Naive thymus-derived CD4-positive, alpha-beta T cell (primary cell): ENCODE measurements at regions of chr6 and their contacts with region 1.

Region 1: DNA sequence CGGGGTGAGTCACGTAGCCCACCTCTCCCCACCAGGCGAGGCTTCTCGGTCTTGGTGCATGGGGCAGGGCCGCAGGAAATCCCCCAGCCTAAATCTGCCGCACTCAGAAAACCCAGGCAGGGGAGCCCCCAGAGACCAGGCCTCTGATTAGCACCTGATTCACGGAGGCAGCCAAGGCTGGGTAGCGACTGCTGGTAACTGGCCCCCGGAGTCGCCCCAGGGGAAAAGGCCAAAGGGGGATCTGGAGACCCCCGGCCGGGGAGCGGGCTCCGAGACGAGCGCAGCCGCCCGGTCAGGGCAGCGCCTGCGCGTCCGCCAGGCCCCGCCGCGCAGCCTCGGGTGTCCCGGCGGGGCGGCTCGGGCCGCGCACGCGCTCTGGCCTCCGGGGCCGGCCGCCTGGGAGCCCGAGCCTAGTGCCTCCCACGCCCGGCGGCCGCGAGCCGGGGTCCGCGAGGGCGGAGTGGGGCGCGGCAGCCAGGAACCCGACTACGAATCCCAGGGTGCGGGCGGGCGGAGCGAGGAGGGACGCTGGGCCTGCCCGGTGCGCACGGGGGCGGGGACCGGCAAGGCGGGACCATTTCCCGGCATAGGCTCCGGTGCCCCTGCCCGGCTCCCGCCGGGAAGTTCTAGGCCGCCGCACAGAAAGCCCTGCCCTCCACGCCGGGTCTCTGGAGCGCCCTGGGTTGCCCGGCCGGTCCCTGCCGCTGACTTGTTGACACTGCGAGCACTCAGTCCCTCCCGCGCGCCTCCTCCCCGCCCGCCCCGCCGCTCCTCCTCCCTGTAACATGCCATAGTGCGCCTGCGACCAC is at the start of gene DUSP22:
- DNase-seq: peak; percentile 52 to 95 (median 78)
- ATAC-seq: peak; percentile 74
- H3K4me3 ChIP-seq: peak within 1 kb of the TSS; percentile 63
- H3K4me3 Mint-ChIP-seq: peak within 1 kb of the TSS; percentile 85 to 97 (median 93)
- H3K27ac ChIP-seq: peak within 1 kb of the TSS; percentile 82
- H3K27ac Mint-ChIP-seq: peak within 1 kb of the TSS; percentile 86 to 98 (median 94)
- H3K4me1 ChIP-seq: peaks cover 9 to 26% of the 10 kb centered on the region in 2 donors
- H3K4me1 Mint-ChIP-seq: peaks cover 31 to 63% (median 47%) of the 10 kb centered on the region in 7 donors
- H3K27me3 ChIP-seq: no peaks in the 10 kb centered on the region
- H3K27me3 Mint-ChIP-seq: no peaks in the 10 kb centered on the region
- total RNA-seq, gene DUSP22: 24.8 to 57.2 (median 51.0) TPM

Region 2: DNA sequence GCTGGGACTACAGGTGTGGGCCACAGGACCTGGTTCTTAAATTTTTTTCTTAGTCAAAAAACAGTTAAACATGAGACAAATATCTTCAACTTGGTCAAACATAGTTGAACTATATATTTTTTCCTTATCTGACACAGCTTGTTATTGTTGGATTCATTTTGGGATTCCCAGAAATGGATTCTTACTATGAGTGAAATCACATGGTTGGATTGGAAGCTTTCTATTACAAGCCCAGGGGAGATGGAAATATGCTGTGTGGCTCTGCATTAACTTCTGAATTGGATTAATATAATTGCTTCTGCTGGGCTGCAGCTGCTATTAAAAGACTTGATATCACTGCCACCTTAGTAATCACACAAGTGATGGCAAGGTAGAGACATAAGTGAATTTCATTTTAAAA is 126.0 kb before region 1 on chr6:
- CTCF ChIA-PET with region 1: no interaction called
- POLR2A ChIA-PET with region 1: no interaction called
- intact Hi-C with region 1: no loop called
- DNase-seq: no peak
- ATAC-seq: no peak
- H3K4me3 ChIP-seq: no peak overlapping the region
- H3K4me3 Mint-ChIP-seq: no peak overlapping the region
- H3K27ac ChIP-seq: no peak overlapping the region
- H3K27ac Mint-ChIP-seq: no peak overlapping the region
- H3K4me1 ChIP-seq: no peaks in the 10 kb centered on the region
- H3K4me1 Mint-ChIP-seq: no peaks in the 10 kb centered on the region
- H3K27me3 ChIP-seq: no peaks in the 10 kb centered on the region
- H3K27me3 Mint-ChIP-seq: peaks cover 0 to 43% (median 0%) of the 10 kb centered on the region in 5 donors

Region 3: DNA sequence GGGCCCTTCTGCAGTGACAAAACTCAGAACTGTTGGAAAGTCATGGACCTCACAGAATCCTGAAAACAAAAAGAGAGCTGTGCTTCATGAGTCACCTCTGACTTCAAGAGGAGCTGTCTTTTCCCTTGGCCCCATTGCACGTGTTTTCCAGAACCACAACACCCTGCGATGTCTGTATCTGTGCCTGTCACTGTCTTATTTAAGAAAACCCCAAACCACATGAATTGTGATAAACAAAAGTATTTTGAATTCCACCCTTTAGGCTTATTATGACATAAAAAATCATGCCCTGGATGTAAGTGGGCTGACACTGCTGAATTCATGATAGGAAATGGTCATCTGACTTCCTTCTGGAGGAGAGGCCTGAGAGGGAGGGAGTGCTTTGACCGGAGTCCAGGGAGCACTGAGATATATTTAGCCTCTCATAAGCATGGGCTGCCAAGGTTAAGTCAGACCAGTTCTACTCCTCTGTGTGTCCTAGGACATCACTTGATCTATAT is 96.0 kb before region 1 on chr6:
- CTCF ChIA-PET with region 1: no interaction called
- POLR2A ChIA-PET with region 1: interaction called, 4 read pairs
- intact Hi-C with region 1: loop called (anchors 1 kb)
- DNase-seq: peak in 8 of 9 donors; percentile 42 to 76 (median 64)
- ATAC-seq: peak; percentile 88
- H3K4me3 ChIP-seq: no peak overlapping the region
- H3K4me3 Mint-ChIP-seq: peak overlapping the region in 9 of 10 donors; percentile 16 to 72 (median 44)
- H3K27ac ChIP-seq: no peak overlapping the region
- H3K27ac Mint-ChIP-seq: peak overlapping the region; percentile 16 to 89 (median 69)
- H3K4me1 ChIP-seq: peaks cover 31 to 32% of the 10 kb centered on the region in 2 donors
- H3K4me1 Mint-ChIP-seq: peaks cover 32 to 48% (median 43%) of the 10 kb centered on the region in 7 donors
- H3K27me3 ChIP-seq: no peaks in the 10 kb centered on the region
- H3K27me3 Mint-ChIP-seq: no peaks in the 10 kb centered on the region

Region 4: DNA sequence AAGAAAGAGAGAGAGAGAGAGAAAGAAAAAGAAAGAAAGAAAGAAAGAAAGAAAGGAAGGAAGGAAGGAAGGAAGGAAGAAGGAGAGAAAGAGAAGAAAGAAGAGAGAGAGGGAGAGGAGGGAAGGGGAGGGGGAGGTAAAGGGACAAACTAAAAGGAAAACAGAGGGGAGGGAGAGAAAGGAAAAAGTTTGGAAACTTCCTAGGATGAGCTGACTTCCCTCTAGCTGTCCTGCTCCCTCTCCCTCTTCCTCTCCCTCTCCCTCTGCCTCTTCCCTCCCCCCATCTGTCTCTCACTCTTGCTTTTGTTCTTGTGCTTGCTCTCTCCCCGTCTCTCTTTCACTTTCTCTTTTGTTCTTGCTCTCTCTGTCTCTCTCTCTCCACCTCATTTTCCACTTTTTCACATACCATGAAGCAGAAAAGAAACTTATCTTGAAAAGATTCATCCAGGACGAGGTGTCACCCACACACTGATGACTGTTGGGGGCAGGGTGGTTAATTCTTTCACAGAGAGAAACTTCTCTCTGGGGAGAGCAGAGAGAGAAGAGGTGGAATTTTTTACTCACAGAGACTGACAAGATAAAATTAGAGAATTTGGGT is 56.0 kb before region 1 on chr6:
- CTCF ChIA-PET with region 1: no interaction called
- POLR2A ChIA-PET with region 1: interaction called, 3 read pairs
- intact Hi-C with region 1: loop called (anchors 1 kb)
- DNase-seq: peak in 8 of 9 donors; percentile 33 to 66 (median 60)
- ATAC-seq: peak; percentile 88
- H3K4me3 ChIP-seq: peak overlapping the region; percentile 41
- H3K4me3 Mint-ChIP-seq: peak overlapping the region; percentile 67 to 85 (median 79)
- H3K27ac ChIP-seq: peak overlapping the region; percentile 56
- H3K27ac Mint-ChIP-seq: peak overlapping the region; percentile 82 to 95 (median 88)
- H3K4me1 ChIP-seq: peaks cover 15 to 22% of the 10 kb centered on the region in 2 donors
- H3K4me1 Mint-ChIP-seq: peaks cover 19 to 45% (median 27%) of the 10 kb centered on the region in 7 donors
- H3K27me3 ChIP-seq: no peaks in the 10 kb centered on the region
- H3K27me3 Mint-ChIP-seq: no peaks in the 10 kb centered on the region

Region 5: DNA sequence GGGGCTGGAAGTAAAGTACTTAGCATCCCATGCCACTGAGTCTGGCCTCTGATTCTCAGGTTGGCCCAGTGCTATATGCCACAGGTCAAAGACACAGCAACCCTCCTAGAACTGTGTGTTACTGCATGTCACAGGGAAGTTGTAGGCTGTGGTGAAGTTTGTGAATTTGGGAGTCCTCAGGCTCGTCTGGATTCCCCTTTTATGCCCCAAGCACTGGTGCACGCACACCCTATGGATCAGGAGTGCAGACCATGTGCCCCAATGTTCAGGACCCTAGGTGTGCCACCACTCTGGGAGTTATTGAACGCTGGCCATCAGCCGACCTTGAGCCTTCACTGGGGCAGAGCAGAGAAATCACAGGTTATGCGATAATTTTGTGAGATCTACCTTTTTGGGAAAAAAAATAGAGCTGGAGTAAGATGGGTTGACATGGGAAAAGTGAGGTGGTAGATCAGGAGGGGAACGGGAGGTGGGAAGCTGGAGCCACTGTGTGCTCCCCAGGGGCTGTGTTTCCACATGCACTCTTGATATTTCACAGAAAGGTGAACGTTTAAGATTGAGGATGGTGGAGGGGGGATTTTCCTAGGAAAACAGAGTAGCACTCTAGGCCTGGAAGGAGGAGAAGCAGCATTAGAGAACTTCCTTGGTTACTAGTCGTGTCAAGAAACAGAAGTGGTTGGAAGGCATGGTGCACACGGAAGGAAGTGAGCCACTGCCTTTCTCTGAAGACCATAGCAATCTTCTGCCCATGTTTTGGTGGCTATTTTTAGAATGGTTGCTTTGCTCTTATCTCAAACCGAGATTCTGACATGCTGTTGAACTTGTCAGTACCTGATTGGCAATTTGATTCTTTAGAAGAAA is 44.5 kb after region 1 on chr6:
- CTCF ChIA-PET with region 1: no interaction called
- POLR2A ChIA-PET with region 1: interaction called, 3 read pairs
- intact Hi-C with region 1: loop called (anchors 2 kb)
- DNase-seq: peak in 2 of 9 donors; percentile 13 to 18
- ATAC-seq: peak; percentile 58
- H3K4me3 ChIP-seq: no peak overlapping the region
- H3K4me3 Mint-ChIP-seq: peak overlapping the region; percentile 2 to 74 (median 42)
- H3K27ac ChIP-seq: no peak overlapping the region
- H3K27ac Mint-ChIP-seq: peak overlapping the region in 7 of 9 donors; percentile 18 to 87 (median 60)
- H3K4me1 ChIP-seq: peaks cover 21 to 28% of the 10 kb centered on the region in 2 donors
- H3K4me1 Mint-ChIP-seq: peaks cover 28 to 54% (median 52%) of the 10 kb centered on the region in 7 donors
- H3K27me3 ChIP-seq: no peaks in the 10 kb centered on the region
- H3K27me3 Mint-ChIP-seq: no peaks in the 10 kb centered on the region

Region 6: GRCh38 chr6:364609-365540 is 73.0 kb after region 1 on chr6:
- CTCF ChIA-PET with region 1: no interaction called
- POLR2A ChIA-PET with region 1: no interaction called
- intact Hi-C with region 1: no loop called
- DNase-seq: no peak
- ATAC-seq: no peak
- H3K4me3 ChIP-seq: no peak overlapping the region
- H3K4me3 Mint-ChIP-seq: no peak overlapping the region
- H3K27ac ChIP-seq: no peak overlapping the region
- H3K27ac Mint-ChIP-seq: no peak overlapping the region
- H3K4me1 ChIP-seq: no peaks in the 10 kb centered on the region
- H3K4me1 Mint-ChIP-seq: peaks cover 0 to 2% (median 0%) of the 10 kb centered on the region in 7 donors
- H3K27me3 ChIP-seq: no peaks in the 10 kb centered on the region
- H3K27me3 Mint-ChIP-seq: peaks cover 0 to 18% (median 7%) of the 10 kb centered on the region in 5 donors

Region 7: GRCh38 chr6:474453-475185 is 182.7 kb after region 1 on chr6:
- CTCF ChIA-PET with region 1: no interaction called
- POLR2A ChIA-PET with region 1: no interaction called
- intact Hi-C with region 1: loop called in 1 of 2 experiments (anchors 1 kb)
- DNase-seq: peak; percentile 25 to 75 (median 72)
- ATAC-seq: peak; percentile 95
- H3K4me3 ChIP-seq: peak overlapping the region; percentile 36
- H3K4me3 Mint-ChIP-seq: peak overlapping the region; percentile 9 to 82 (median 72)
- H3K27ac ChIP-seq: peak overlapping the region; percentile 47
- H3K27ac Mint-ChIP-seq: peak overlapping the region; percentile 7 to 83 (median 60)
- H3K4me1 ChIP-seq: peaks cover 14 to 22% of the 10 kb centered on the region in 2 donors
- H3K4me1 Mint-ChIP-seq: peaks cover 25 to 76% (median 58%) of the 10 kb centered on the region in 7 donors
- H3K27me3 ChIP-seq: no peaks in the 10 kb centered on the region
- H3K27me3 Mint-ChIP-seq: no peaks in the 10 kb centered on the region

Region 8: GRCh38 chr6:692855-693722 is 401.2 kb after region 1 on chr6 and contains the start of gene EXOC2:
- CTCF ChIA-PET with region 1: no interaction called
- POLR2A ChIA-PET with region 1: no interaction called
- intact Hi-C with region 1: loop called (anchors 2 to 10 kb)
- DNase-seq: peak; percentile 70 to 88 (median 81)
- ATAC-seq: peak; percentile 93
- H3K4me3 ChIP-seq: peak within 1 kb of the TSS; percentile 87
- H3K4me3 Mint-ChIP-seq: peak within 1 kb of the TSS; percentile 92 to 96 (median 95)
- H3K27ac ChIP-seq: peak within 1 kb of the TSS; percentile 83
- H3K27ac Mint-ChIP-seq: peak within 1 kb of the TSS; percentile 84 to 92 (median 91)
- H3K4me1 ChIP-seq: peaks cover 14 to 20% of the 10 kb centered on the region in 2 donors
- H3K4me1 Mint-ChIP-seq: peaks cover 23 to 45% (median 29%) of the 10 kb centered on the region in 7 donors
- H3K27me3 ChIP-seq: no peaks in the 10 kb centered on the region
- H3K27me3 Mint-ChIP-seq: no peaks in the 10 kb centered on the region
- total RNA-seq, gene EXOC2: 26.7 to 40.6 (median 38.8) TPM